Activated CD4-positive, alpha-beta memory T cell treated with anti-CD3 and anti-CD28 coated beads for 36 hours (primary cell): ENCODE measurements at regions of chr12 and their contacts with region 1.

Region 1: GRCh38 chr12:76559400-76560085 is at the start of gene OSBPL8:
- DNase-seq: peak; percentile 98
- H3K4me3 Mint-ChIP-seq: peak within 1 kb of the TSS; percentile 88
- H3K27ac Mint-ChIP-seq: peak within 1 kb of the TSS; percentile 97
- H3K4me1 Mint-ChIP-seq: peaks cover 34% of the 10 kb centered on the region
- H3K27me3 Mint-ChIP-seq: no peaks in the 10 kb centered on the region
- total RNA-seq, gene OSBPL8: 69.8 to 73.7 TPM

Region 2: DNA sequence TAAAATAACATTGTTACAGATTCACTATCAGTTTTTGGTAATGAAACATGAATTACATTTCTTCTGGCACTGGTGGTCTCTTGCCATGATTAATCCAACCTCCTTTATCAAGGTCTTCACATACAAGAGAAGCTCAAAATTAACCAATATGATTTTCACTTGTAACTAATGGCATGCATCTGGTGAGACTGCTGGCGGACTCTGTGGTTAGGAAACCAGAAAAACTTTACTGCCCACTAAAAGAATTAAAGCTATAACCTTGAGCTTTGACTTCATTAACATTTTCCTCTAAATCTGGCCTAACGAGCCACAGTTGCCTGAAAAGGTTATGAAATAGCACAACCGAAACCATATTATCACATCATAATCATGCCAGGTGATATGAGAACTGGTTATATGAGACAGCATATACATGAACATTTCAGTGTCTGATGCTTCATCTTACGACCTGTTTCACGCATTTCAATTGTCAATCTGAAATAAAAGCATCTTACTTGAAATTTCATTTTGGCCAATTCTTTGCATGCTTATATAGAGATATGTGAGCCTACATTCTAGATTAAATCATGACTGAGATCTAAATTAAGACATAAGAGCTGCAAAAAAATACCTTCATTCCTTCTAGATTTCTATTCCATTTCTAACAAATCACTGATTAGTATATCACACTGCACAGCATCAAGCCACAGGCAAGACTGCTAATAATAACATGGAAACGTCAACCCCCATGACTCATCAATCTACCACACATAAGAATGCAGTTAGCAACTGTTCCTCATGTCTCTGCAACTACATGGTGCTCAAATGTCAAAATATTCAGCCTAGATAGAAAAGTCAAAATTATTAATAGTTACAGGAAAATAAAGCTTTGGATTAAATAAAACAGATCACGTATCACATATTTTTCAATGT is 89.3 kb before region 1 on chr12:
- CTCF ChIA-PET with region 1: no interaction called
- POLR2A ChIA-PET with region 1: interaction called, 4 read pairs
- intact Hi-C with region 1: loop called (anchors 5 kb)
- DNase-seq: no peak
- H3K4me3 Mint-ChIP-seq: no peak overlapping the region
- H3K27ac Mint-ChIP-seq: no peak overlapping the region
- H3K4me1 Mint-ChIP-seq: peaks cover 13% of the 10 kb centered on the region
- H3K27me3 Mint-ChIP-seq: no peaks in the 10 kb centered on the region

Region 3: DNA sequence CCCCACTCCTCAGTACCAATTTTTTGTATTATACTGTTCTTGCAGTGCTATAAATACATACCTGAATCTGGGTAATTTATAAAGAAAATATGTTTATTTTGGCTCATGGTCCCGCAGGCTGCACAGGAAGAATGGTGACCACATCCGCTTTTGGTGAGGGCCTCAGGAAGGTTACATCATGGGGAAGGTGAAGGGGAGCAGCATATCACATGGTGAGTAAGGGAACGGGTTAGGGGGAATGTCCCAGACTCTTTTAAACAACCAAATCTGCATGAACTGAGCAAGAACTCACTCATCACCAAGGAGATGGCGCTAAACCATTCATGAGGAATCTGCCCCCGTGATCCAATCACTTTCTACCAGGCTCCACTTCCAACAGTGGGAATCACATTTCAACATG is 40.0 kb before region 1 on chr12:
- CTCF ChIA-PET with region 1: no interaction called
- POLR2A ChIA-PET with region 1: no interaction called
- intact Hi-C with region 1: loop called (anchors 2 kb)
- DNase-seq: peak; percentile 54
- H3K4me3 Mint-ChIP-seq: no peak overlapping the region
- H3K27ac Mint-ChIP-seq: peak overlapping the region; percentile 71
- H3K4me1 Mint-ChIP-seq: peaks cover 39% of the 10 kb centered on the region
- H3K27me3 Mint-ChIP-seq: no peaks in the 10 kb centered on the region

Region 4: DNA sequence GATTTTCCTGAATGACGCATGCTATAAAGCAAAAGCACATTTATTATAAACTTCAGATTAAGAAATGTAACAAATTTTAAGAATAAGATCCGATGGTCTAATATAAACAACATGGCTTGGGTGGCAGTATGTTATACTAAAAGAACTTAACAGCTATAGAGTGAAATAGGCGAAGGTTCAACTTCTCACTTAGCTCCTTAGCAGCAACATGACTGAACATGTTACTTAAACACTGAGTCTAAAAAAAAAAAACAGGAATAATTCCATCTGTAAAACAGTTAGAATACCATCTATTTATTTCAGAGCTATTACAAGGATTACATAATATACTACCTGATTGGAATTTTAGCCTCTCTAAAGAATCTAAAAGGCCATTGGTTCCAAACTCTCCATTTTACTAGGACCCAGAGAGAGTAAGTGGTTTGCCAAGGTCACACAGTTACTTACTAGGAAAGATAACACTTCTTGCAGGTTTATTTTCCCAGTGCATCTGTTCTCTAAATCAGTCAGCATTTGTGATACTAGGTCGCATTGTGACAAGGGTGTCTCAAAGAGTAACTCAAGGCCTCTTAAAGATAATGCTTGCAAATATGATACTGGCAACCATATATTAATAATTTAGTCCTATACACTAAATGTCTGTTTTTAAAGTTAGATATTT is 14.8 kb before region 1 on chr12:
- CTCF ChIA-PET with region 1: interaction called, 4 read pairs
- POLR2A ChIA-PET with region 1: interaction called, 7 read pairs
- intact Hi-C with region 1: loop called (anchors 1 kb)
- DNase-seq: no peak
- H3K4me3 Mint-ChIP-seq: no peak overlapping the region
- H3K27ac Mint-ChIP-seq: no peak overlapping the region
- H3K4me1 Mint-ChIP-seq: peaks cover 66% of the 10 kb centered on the region
- H3K27me3 Mint-ChIP-seq: no peaks in the 10 kb centered on the region

Region 5: DNA sequence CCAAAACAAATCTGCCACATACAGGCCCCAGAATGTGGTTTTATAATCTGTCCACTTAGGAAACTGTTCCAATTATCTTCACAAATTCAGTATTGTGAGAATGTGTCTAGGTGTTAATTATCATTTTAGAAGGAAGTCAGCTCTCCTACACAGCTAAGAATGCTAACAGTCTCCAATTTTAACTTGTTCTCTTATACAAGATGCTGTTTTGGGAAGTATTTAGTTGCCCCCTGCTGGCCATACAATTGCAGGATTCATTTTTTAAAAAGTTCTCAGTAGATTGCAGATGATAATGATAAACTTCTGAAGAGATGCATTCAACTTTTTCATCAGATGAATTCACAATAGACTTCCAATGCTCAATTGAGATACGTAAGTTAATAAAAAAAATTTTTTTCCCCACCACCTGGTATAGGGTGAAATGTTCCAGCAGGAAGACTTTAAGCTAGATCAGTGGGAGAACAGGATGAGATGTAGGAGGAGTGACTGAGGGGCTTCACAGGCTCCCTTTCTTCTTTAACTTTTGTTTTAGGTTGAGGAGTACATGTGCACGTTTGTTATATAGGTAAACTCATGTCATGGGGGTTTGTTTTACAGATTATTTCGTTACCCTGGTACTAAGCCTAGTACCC is 27.3 kb after region 1 on chr12:
- CTCF ChIA-PET with region 1: interaction called, 3 read pairs
- POLR2A ChIA-PET with region 1: no interaction called
- intact Hi-C with region 1: loop called (anchors 1 kb)
- DNase-seq: peak; percentile 18
- H3K4me3 Mint-ChIP-seq: no peak overlapping the region
- H3K27ac Mint-ChIP-seq: no peak overlapping the region
- H3K4me1 Mint-ChIP-seq: peaks cover 1% of the 10 kb centered on the region
- H3K27me3 Mint-ChIP-seq: no peaks in the 10 kb centered on the region

Region 6: GRCh38 chr12:76763743-76764675 is 204.5 kb after region 1 on chr12 and contains the start of gene ZDHHC17:
- CTCF ChIA-PET with region 1: interaction called, 3 read pairs
- POLR2A ChIA-PET with region 1: interaction called, 3 read pairs
- intact Hi-C with region 1: loop called (anchors 1 kb)
- DNase-seq: peak; percentile 93
- H3K4me3 Mint-ChIP-seq: peak within 1 kb of the TSS; percentile 99
- H3K27ac Mint-ChIP-seq: peak within 1 kb of the TSS; percentile 93
- H3K4me1 Mint-ChIP-seq: peaks cover 34% of the 10 kb centered on the region
- H3K27me3 Mint-ChIP-seq: no peaks in the 10 kb centered on the region
- total RNA-seq, gene ZDHHC17: 18.8 to 20.0 TPM

Region 7: DNA sequence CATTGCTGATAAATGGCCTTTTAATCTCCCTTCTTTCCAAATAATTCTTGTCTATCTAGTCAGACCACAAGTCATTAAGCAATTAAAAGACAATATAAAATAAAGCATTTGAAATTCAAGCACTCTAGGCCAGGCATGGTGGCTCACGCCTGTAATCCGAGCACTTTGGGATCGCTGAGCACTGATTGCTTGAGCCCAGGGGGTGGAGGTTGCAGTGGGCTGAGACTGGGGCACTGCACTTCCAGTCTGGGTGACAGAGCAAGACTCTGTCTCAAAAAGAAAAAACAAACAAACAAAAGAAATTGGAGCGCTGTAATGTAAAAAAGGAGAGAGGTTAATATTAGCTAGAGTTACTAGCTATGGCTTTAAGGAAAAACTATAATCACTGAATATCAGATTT is 349.7 kb after region 1 on chr12:
- CTCF ChIA-PET with region 1: no interaction called
- POLR2A ChIA-PET with region 1: no interaction called
- intact Hi-C with region 1: no loop called
- DNase-seq: no peak
- H3K4me3 Mint-ChIP-seq: no peak overlapping the region
- H3K27ac Mint-ChIP-seq: no peak overlapping the region
- H3K4me1 Mint-ChIP-seq: no peaks in the 10 kb centered on the region
- H3K27me3 Mint-ChIP-seq: peaks cover 10% of the 10 kb centered on the region